Activated CD4-positive, alpha-beta T cell treated with anti-CD3 and anti-CD28 coated beads, Interleukin-2, amount 10 ng/mL, durations not matched to agents 24 days and 14 days (primary cell): ENCODE measurements at regions of chr16 and their contacts with region 1.

Region 1: GRCh38 chr16:17343028-17343427 is 127.7 kb downstream of the XYLT1 start:
- DNase-seq: peak; percentile 89
- H3K4me3 Mint-ChIP-seq: peak overlapping the region; percentile 79
- H3K27ac Mint-ChIP-seq: peak overlapping the region; percentile 91
- H3K4me1 Mint-ChIP-seq: peaks cover 72% of the 10 kb centered on the region
- H3K27me3 Mint-ChIP-seq: no peaks in the 10 kb centered on the region

Region 2: GRCh38 chr16:17304491-17305119 is 38.4 kb before region 1 on chr16:
- intact Hi-C with region 1: loop called (anchors 5 kb)
- DNase-seq: no peak
- H3K4me3 Mint-ChIP-seq: peak overlapping the region; percentile 28
- H3K27ac Mint-ChIP-seq: peak overlapping the region; percentile 7
- H3K4me1 Mint-ChIP-seq: peaks cover 41% of the 10 kb centered on the region
- H3K27me3 Mint-ChIP-seq: no peaks in the 10 kb centered on the region

Region 3: GRCh38 chr16:17369421-17370222 is 26.6 kb after region 1 on chr16:
- intact Hi-C with region 1: loop called (anchors 1 kb)
- DNase-seq: peak; percentile 93
- H3K4me3 Mint-ChIP-seq: peak overlapping the region; percentile 86
- H3K27ac Mint-ChIP-seq: peak overlapping the region; percentile 96
- H3K4me1 Mint-ChIP-seq: peaks cover 84% of the 10 kb centered on the region
- H3K27me3 Mint-ChIP-seq: no peaks in the 10 kb centered on the region

Region 4: GRCh38 chr16:17416461-17417311 is 73.7 kb after region 1 on chr16:
- intact Hi-C with region 1: loop called (anchors 2 kb)
- DNase-seq: peak; percentile 85
- H3K4me3 Mint-ChIP-seq: peak overlapping the region; percentile 83
- H3K27ac Mint-ChIP-seq: peak overlapping the region; percentile 90
- H3K4me1 Mint-ChIP-seq: peaks cover 52% of the 10 kb centered on the region
- H3K27me3 Mint-ChIP-seq: no peaks in the 10 kb centered on the region

Region 5: DNA sequence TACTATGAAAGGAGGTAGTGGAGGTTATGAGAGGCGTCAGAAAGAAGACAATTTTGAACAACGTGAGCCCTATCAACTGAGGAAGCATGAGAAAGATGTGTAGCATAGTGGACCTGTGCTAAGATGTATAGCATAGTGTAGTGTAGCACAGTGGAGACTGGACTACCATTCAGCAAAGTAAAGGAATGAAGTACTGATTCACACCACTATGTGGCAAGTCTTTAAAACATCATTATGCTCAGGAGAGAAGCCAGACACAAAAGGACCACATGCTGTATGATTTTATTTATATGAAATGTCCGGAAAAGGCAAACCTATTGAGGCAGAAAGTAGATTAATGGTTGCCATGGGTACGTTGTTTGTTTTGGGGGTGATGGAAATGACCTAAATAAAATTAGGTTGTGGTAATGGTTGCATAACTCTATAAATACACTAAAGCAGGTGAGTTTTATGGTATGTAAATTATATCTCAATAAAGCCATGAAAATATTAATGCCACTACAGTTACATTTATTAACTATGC is 148.2 kb after region 1 on chr16:
- intact Hi-C with region 1: no loop called
- DNase-seq: no peak
- H3K4me3 Mint-ChIP-seq: no peak overlapping the region
- H3K27ac Mint-ChIP-seq: no peak overlapping the region
- H3K4me1 Mint-ChIP-seq: no peaks in the 10 kb centered on the region
- H3K27me3 Mint-ChIP-seq: peaks cover 12% of the 10 kb centered on the region